Activated naive CD4-positive, alpha-beta T cell treated with anti-CD3 and anti-CD28 coated beads for 36 hours (primary cell): ENCODE measurements at regions of chr14 and their contacts with region 1.

Region 1: DNA sequence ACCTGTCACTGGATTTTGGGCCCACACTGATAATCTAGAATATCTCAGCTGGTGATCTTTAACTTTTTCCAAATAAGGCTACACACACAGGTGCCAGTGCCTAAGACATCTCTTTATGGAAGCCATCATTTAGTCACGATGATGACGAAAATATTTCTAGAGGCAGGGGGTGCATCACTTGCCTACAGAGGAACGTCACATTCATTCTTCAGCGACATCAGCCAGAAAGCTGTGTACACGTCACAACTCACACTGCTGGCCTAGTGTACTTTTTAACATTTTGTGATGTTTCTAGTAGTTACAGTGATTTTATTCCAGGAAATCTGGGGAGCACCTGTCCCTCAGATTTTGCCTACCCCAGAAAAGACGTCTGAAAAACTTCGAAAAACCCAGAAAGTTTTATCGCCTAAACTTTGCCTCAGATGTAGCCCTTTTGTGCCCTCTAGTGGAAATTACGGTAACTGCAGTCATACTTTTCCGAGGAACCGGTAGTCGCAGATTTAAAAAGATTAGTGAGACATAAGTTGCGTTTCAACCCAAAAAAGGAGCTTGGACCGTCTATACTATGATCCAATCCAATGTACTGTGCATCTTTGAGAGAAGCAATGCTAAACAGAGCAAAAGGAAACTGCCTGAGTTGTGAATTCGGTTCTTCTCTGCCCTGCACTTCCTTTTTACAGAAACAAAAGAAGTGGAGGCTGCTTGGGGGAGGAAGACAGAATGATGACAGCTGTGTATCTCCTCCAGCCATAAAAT is 64.3 kb upstream of the STON2 start:
- DNase-seq: peak; percentile 75
- H3K4me3 Mint-ChIP-seq: peak overlapping the region; percentile 73
- H3K27ac Mint-ChIP-seq: peak overlapping the region; percentile 78
- H3K4me1 Mint-ChIP-seq: peaks cover 9% of the 10 kb centered on the region
- H3K27me3 Mint-ChIP-seq: no peaks in the 10 kb centered on the region

Region 2: DNA sequence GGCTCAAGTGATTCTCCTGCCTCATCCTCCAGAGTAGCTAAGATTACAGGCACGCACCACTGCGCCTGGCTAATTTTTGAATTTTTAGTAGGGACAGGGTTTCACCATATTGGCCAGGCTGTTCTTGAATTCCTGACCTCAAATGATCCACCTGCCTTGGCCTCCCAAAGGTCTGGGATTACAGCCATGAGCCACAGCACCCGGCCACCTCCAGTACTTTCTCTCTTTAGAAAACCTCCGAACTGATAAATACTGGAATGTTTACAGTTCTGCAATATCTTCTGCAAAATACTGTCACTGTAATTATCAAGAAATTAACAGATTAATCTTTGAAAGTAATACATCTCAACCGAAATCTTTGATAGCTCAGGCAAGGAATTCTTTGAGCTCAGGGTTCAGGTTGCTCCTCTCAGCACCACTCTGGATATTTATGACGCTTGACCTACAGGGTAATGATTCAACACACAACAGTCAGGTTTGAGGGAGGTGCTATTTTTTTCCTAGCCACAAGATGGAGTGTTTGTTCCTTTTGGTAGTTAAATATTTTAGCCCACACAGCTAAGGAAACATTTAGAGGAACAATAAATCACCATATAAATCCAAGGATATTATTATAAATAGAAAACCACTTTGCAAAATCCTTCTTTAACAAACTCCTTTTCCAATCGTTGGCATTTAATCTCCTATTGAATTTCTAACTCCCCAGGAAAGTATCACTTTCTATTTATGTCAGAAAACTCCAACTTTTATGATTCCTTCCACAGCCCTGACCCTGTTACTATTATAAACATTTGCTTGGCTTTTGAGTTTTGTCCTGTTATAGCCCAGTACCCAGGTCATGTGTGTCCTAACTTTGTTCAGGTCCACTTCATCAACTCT is 195.1 kb before region 1 on chr14:
- CTCF ChIA-PET with region 1: interaction called, 21 read pairs
- intact Hi-C with region 1: loop called (anchors 1 kb)
- DNase-seq: peak; percentile 15
- H3K4me3 Mint-ChIP-seq: no peak overlapping the region
- H3K27ac Mint-ChIP-seq: no peak overlapping the region
- H3K4me1 Mint-ChIP-seq: no peaks in the 10 kb centered on the region
- H3K27me3 Mint-ChIP-seq: peaks cover 12% of the 10 kb centered on the region

Region 3: GRCh38 chr14:81436296-81437138 is 27.9 kb before region 1 on chr14:
- CTCF ChIA-PET with region 1: interaction called, 5 read pairs
- intact Hi-C with region 1: loop called (anchors 1 kb)
- DNase-seq: peak; percentile 40
- H3K4me3 Mint-ChIP-seq: peak overlapping the region; percentile 65
- H3K27ac Mint-ChIP-seq: no peak overlapping the region
- H3K4me1 Mint-ChIP-seq: peaks cover 10% of the 10 kb centered on the region
- H3K27me3 Mint-ChIP-seq: peaks cover 65% of the 10 kb centered on the region

Region 4: GRCh38 chr14:81453166-81453766 is 11.2 kb before region 1 on chr14:
- CTCF ChIA-PET with region 1: interaction called, 20 read pairs
- intact Hi-C with region 1: loop called (anchors 1 kb)
- DNase-seq: peak; percentile 69
- H3K4me3 Mint-ChIP-seq: no peak overlapping the region
- H3K27ac Mint-ChIP-seq: no peak overlapping the region
- H3K4me1 Mint-ChIP-seq: peaks cover 13% of the 10 kb centered on the region
- H3K27me3 Mint-ChIP-seq: peaks cover 11% of the 10 kb centered on the region

Region 5: DNA sequence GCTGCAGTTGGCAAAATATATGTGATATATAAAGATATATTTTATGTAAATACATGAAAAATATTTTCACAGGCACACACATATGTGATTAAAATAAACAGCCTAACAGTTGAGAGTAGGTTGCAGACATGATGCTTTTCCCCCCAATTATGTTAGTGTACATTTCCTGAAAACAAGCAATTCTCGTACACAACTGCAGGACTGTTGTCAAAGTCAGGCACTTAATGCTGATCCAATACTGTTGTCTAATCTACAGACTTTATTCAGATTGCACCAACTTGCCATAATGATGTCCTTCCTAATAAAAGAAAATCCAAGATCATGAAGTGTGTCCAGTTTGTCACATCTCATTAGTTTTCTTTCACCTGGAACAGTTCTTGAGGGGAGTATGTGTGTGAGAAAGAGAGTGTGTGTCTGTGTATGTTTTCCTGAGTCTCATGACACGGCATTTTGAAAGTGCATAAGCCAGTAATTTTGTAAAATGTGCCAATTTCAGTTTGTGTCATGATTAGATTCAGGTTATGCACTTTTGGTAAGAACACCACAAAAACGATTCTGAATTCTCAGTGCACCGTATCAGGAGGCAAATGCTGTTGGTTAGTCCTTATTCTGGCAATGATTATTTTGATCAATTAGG is 85.7 kb after region 1 on chr14:
- CTCF ChIA-PET with region 1: no interaction called
- intact Hi-C with region 1: no loop called
- DNase-seq: peak; percentile 10
- H3K4me3 Mint-ChIP-seq: no peak overlapping the region
- H3K27ac Mint-ChIP-seq: no peak overlapping the region
- H3K4me1 Mint-ChIP-seq: peaks cover 10% of the 10 kb centered on the region
- H3K27me3 Mint-ChIP-seq: peaks cover 14% of the 10 kb centered on the region